Dorsolateral prefrontal cortex (tissue), 120 donors: ENCODE measurements at regions of chr22 and their contacts with region 1.

Region 1: GRCh38 chr22:30386960-30387827 is at the start of gene RNF215:
- DNase-seq: peak; percentile 50 to 92 (median 79)
- H3K4me3 ChIP-seq: peak within 1 kb of the TSS; percentile 34 to 79 (median 66)
- H3K27ac ChIP-seq: peak within 1 kb of the TSS in 48 of 59 donors; percentile 6 to 86 (median 70)
- H3K27me3 ChIP-seq: no peaks in the 10 kb centered on the region
- CTCF ChIP-seq: peak; percentile 82 to 99 (median 94)
- total RNA-seq, gene RNF215: 18.9 to 55.4 (median 34.4) TPM

Region 2: GRCh38 chr22:30104501-30105156 is 282.6 kb before region 1 on chr22:
- intact Hi-C with region 1: loop called (anchors 5 to 10 kb)
- DNase-seq: no peak
- H3K4me3 ChIP-seq: no peak overlapping the region
- H3K27ac ChIP-seq: no peak overlapping the region
- H3K27me3 ChIP-seq: no peaks in the 10 kb centered on the region
- CTCF ChIP-seq: no peak

Region 3: GRCh38 chr22:30289134-30289979 is 97.8 kb before region 1 on chr22 and contains the start of gene CASTOR1:
- intact Hi-C with region 1: loop called (anchors 1 kb)
- DNase-seq: peak; percentile 84 to 98 (median 96)
- H3K4me3 ChIP-seq: peak within 1 kb of the TSS; percentile 67 to 97 (median 90)
- H3K27ac ChIP-seq: peak within 1 kb of the TSS; percentile 59 to 97 (median 92)
- H3K27me3 ChIP-seq: no peaks in the 10 kb centered on the region
- CTCF ChIP-seq: peak in 26 of 56 donors; percentile 8 to 56 (median 26)
- total RNA-seq, gene CASTOR1: 4.6 to 43.5 (median 15.5) TPM

Region 4: GRCh38 chr22:30356449-30357235 is 30.6 kb before region 1 on chr22 and contains the starts of genes CCDC157 and SF3A1:
- intact Hi-C with region 1: loop called in 1 of 2 experiments (anchors 2 kb)
- DNase-seq: peak; percentile 77 to 94 (median 90)
- H3K4me3 ChIP-seq: peak within 1 kb of the TSS; percentile 69 to 100 (median 91)
- H3K27ac ChIP-seq: peak within 1 kb of the TSS; percentile 84 to 99 (median 97)
- H3K27me3 ChIP-seq: no peaks in the 10 kb centered on the region
- CTCF ChIP-seq: peak in 30 of 56 donors; percentile 8 to 61 (median 34)
- total RNA-seq, gene CCDC157: 1.9 to 13.1 (median 6.2) TPM
- total RNA-seq, gene SF3A1: 120 to 195 (median 158) TPM

Region 5: GRCh38 chr22:30485362-30485988 is 98.3 kb after region 1 on chr22:
- intact Hi-C with region 1: loop called (anchors 1 to 5 kb)
- DNase-seq: peak; percentile 41 to 80 (median 55)
- H3K4me3 ChIP-seq: no peak overlapping the region
- H3K27ac ChIP-seq: no peak overlapping the region
- H3K27me3 ChIP-seq: no peaks in the 10 kb centered on the region
- CTCF ChIP-seq: peak; percentile 90 to 100 (median 98)

Region 6: GRCh38 chr22:30506507-30506968 is 119.3 kb after region 1 on chr22:
- intact Hi-C with region 1: no loop called
- DNase-seq: no peak
- H3K4me3 ChIP-seq: no peak overlapping the region
- H3K27ac ChIP-seq: no peak overlapping the region
- H3K27me3 ChIP-seq: peaks cover 0 to 27% (median 5%) of the 10 kb centered on the region in 45 donors
- CTCF ChIP-seq: no peak